Calu3 (cell line): ENCODE measurements at regions of chr6 and their contacts with region 1.

Region 1: DNA sequence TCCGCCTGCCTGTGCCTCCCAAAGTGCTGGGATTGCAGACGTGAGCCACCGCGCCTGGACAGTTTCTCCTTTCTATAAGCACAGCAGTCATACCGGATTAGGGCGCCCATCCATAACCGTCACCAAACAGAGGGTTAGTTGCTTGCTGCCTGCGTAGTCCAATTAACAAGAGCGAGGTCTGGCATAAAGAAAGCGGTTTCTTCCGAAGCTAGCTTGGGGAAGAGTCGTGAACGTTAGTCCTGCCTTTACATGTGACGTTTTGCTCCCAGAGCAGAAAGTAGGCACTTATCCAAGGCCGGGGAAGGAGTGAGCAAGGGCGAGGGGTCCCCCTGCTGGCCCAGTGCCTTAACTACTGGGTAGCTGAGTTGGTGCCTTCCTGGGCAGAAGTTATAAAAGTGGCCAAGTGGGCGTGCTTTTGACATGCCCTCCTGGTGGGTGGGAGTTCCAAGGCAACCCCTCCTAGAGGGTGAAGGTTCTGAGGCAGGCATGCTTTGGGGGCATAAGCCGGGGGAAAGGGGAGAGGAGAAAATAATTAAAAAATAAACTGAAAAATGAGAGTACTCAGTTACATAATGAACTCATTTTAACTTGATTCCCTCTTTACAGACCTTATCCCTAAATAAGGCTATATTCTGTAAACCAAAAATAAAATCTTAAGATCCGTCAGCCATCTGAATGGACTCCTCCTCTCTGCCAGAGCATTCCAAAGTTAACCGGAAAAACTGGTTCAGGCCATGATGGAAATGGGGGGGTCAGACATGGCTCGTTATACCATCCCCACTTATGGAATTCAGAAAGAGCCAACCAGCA is 88.0 kb downstream of the FAM217A start:
- DNase-seq: peak; percentile 85
- H3K4me3 Mint-ChIP-seq: peak overlapping the region; percentile 60
- H3K27ac Mint-ChIP-seq: peak overlapping the region; percentile 54
- H3K4me1 Mint-ChIP-seq: peaks cover 59% of the 10 kb centered on the region
- H3K27me3 Mint-ChIP-seq: no peaks in the 10 kb centered on the region
- CTCF ChIP-seq: peak; percentile 74

Region 2: DNA sequence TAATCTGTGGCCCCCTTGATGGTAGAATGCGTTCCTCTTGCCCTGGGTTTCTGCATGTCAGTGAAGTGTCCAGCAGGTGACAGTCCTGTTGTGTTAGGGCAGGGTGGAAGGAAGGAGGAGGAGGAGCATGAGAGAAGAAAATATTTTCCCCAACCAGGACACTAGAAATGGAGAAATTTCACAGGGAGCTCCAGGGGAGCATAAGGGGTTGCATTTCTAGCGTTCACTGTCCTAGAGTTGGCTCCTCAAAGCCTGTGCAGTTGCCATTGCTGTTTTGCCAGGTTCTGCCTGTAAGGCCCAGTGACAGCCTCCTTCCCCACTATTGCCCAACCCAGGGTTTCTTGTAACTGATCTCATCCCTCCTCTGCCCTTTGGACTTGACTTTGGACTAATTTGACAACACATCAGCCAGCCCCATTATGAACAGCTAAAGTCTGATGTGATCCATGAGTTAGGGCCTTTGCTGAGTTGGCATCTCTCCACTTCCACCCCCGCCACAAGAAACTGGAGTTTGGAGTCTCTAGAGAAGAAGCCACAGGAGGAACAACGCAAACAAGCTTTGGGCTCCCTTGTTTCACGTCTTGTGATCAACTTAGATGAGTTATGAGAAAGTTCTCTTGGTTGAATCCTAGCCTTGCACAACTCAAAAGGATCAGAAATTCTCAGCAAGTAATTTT is 155.7 kb before region 1 on chr6:
- CTCF ChIA-PET with region 1: no interaction called
- intact Hi-C with region 1: loop called (anchors 2 kb)
- DNase-seq: peak; percentile 16
- H3K4me3 Mint-ChIP-seq: no peak overlapping the region
- H3K27ac Mint-ChIP-seq: no peak overlapping the region
- H3K4me1 Mint-ChIP-seq: peaks cover 12% of the 10 kb centered on the region
- H3K27me3 Mint-ChIP-seq: no peaks in the 10 kb centered on the region
- CTCF ChIP-seq: no peak

Region 3: GRCh38 chr6:4020822-4021132 is 29.9 kb after region 1 on chr6:
- CTCF ChIA-PET with region 1: no interaction called
- intact Hi-C with region 1: no loop called
- DNase-seq: no peak
- H3K4me3 Mint-ChIP-seq: peak overlapping the region; percentile 92
- H3K27ac Mint-ChIP-seq: peak overlapping the region; percentile 95
- H3K4me1 Mint-ChIP-seq: peaks cover 6% of the 10 kb centered on the region
- H3K27me3 Mint-ChIP-seq: no peaks in the 10 kb centered on the region
- CTCF ChIP-seq: no peak

Region 4: DNA sequence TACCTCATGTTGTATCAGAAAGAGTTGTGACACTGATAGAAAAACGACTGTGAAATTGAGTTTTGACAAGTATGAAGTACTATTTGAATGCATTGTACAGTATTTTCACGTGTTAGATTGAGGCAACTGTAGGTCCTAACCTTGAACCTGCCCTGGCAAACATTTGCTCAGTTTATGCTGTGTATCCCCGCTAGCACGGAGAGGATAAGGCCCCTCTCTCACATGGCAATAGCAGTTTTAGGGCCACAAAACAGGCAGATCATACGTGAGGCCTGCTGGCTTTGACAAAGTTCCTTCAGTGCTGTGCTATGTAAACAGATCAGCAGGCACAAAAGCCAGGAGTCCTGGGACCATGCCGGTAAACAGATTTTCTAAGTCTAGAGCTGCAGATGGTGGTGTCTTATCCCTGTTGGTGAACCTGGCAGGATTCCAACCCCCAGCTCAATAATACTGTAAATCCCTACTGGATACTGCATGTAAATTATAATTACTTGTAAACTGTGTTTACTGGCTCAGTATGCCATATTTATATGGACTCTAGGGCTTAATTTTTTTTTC is 111.9 kb after region 1 on chr6:
- CTCF ChIA-PET with region 1: no interaction called
- intact Hi-C with region 1: no loop called
- DNase-seq: no peak
- H3K4me3 Mint-ChIP-seq: no peak overlapping the region
- H3K27ac Mint-ChIP-seq: no peak overlapping the region
- H3K4me1 Mint-ChIP-seq: peaks cover 33% of the 10 kb centered on the region
- H3K27me3 Mint-ChIP-seq: no peaks in the 10 kb centered on the region
- CTCF ChIP-seq: no peak

Region 5: DNA sequence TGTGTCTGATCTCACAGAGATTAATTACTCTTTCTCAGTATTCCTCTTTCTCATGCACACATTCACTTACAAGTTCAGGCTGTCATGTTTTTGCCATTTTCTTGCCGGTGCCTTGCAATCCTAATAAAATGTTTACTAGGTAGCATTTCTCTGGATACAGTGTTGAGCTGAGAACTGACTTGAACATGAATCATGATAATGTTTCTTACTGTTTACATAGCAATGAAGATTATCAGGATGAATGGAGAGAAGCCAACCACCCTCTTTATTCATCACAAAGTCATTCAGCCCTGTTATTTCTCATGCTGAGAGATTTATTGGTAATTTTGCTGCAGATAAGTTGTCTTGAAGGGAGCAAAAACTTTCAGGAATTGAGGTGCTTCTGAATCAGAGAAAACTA is 330.0 kb after region 1 on chr6:
- CTCF ChIA-PET with region 1: no interaction called
- intact Hi-C with region 1: no loop called
- DNase-seq: no peak
- H3K4me3 Mint-ChIP-seq: no peak overlapping the region
- H3K27ac Mint-ChIP-seq: no peak overlapping the region
- H3K4me1 Mint-ChIP-seq: peaks cover 38% of the 10 kb centered on the region
- H3K27me3 Mint-ChIP-seq: no peaks in the 10 kb centered on the region
- CTCF ChIP-seq: no peak